CD8-positive, alpha-beta T cell (primary cell): ENCODE measurements at regions of chr14 and their contacts with region 1.

Region 1: DNA sequence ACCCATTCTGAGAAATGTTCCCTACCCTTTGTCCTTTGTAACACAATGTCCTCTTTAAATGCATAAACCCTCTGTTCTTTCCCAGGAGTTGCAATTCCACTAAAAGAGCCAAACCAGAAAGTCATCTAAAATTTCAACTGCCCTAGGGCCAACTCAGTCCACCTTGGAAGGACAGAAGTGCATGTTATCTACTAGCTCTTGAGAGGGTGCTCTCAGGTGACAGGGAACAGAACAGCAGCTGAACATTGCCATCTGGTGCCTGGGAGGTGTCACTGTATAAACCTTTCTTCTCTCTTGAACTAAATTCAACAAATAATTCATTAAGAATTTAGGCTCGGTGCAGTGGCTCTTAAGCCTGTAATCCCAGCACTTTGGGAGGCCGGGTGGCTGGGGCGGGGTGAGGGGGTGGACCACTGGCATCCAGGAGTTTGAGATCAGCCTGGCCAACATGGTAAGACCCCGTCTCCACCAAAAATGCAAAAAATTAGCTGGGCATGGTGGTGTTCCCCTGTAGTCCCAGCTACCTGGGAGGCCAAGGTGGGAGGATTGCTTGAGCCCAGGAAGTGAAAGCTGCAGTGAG is 10.3 kb upstream of the FERMT2 start:
- DNase-seq: peak in 8 of 9 experiments; percentile 30 to 80 (median 60)
- ATAC-seq: peak; percentile 87
- H3K4me3 ChIP-seq: no peak overlapping the region
- H3K4me3 Mint-ChIP-seq: no peak overlapping the region
- H3K27ac ChIP-seq: no peak overlapping the region
- H3K27ac Mint-ChIP-seq: peak overlapping the region; percentile 5
- H3K4me1 ChIP-seq: no peaks in the 10 kb centered on the region
- H3K4me1 Mint-ChIP-seq: peaks cover 6% of the 10 kb centered on the region
- H3K27me3 ChIP-seq: no peaks in the 10 kb centered on the region
- H3K27me3 Mint-ChIP-seq: no peaks in the 10 kb centered on the region
- CTCF ChIP-seq: peak; percentile 54

Region 2: GRCh38 chr14:51989293-51990234 is 971.6 kb before region 1 on chr14 and contains the start of gene RTRAF:
- CTCF ChIA-PET with region 1: no interaction called
- POLR2A ChIA-PET with region 1: no interaction called
- intact Hi-C with region 1: loop called in 1 of 2 experiments (anchors 10 kb)
- DNase-seq: peak; percentile 77 to 97 (median 91)
- ATAC-seq: peak; percentile 96
- H3K4me3 ChIP-seq: peak within 1 kb of the TSS; percentile 65 to 84
- H3K4me3 Mint-ChIP-seq: peak within 1 kb of the TSS; percentile 94
- H3K27ac ChIP-seq: peak within 1 kb of the TSS; percentile 84 to 85
- H3K27ac Mint-ChIP-seq: peak within 1 kb of the TSS; percentile 94
- H3K4me1 ChIP-seq: peaks cover 15% of the 10 kb centered on the region
- H3K4me1 Mint-ChIP-seq: peaks cover 46% of the 10 kb centered on the region
- H3K27me3 ChIP-seq: no peaks in the 10 kb centered on the region
- H3K27me3 Mint-ChIP-seq: no peaks in the 10 kb centered on the region
- CTCF ChIP-seq: no peak
- total RNA-seq, gene RTRAF: 155 to 161 TPM

Region 3: DNA sequence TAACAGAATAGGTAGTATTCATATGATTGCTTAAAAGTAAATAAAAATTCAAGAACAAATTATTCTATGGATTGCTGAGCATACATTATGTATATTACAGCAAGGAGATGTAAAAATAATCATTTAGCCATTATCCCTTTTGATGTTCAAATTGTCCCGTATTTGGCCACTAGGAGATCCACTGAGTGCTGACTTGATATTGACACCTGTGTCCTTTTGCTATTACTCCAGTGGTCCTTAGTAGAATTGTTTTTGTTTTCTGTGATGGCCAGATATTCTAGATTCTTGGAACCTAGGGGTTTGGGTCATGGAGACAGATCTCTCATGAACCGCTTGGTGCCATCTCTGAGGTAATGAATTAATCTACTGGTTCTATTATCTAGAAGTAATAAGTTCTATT is 282.6 kb before region 1 on chr14:
- CTCF ChIA-PET with region 1: interaction called, 3 read pairs
- POLR2A ChIA-PET with region 1: no interaction called
- intact Hi-C with region 1: loop called in 1 of 2 experiments (anchors 10 kb)
- DNase-seq: peak in 2 of 9 experiments; percentile 40 to 51
- ATAC-seq: peak; percentile 61
- H3K4me3 ChIP-seq: no peak overlapping the region
- H3K4me3 Mint-ChIP-seq: no peak overlapping the region
- H3K27ac ChIP-seq: no peak overlapping the region
- H3K27ac Mint-ChIP-seq: no peak overlapping the region
- H3K4me1 ChIP-seq: no peaks in the 10 kb centered on the region
- H3K4me1 Mint-ChIP-seq: peaks cover 2% of the 10 kb centered on the region
- H3K27me3 ChIP-seq: no peaks in the 10 kb centered on the region
- H3K27me3 Mint-ChIP-seq: no peaks in the 10 kb centered on the region
- CTCF ChIP-seq: peak; percentile 59

Region 4: GRCh38 chr14:52829527-52829926 is 131.6 kb before region 1 on chr14:
- CTCF ChIA-PET with region 1: interaction called, 143 read pairs
- POLR2A ChIA-PET with region 1: interaction called, 4 read pairs
- intact Hi-C with region 1: no loop called
- DNase-seq: no peak
- ATAC-seq: no peak
- H3K4me3 ChIP-seq: no peak overlapping the region
- H3K4me3 Mint-ChIP-seq: no peak overlapping the region
- H3K27ac ChIP-seq: no peak overlapping the region
- H3K27ac Mint-ChIP-seq: no peak overlapping the region
- H3K4me1 ChIP-seq: no peaks in the 10 kb centered on the region
- H3K4me1 Mint-ChIP-seq: no peaks in the 10 kb centered on the region
- H3K27me3 ChIP-seq: no peaks in the 10 kb centered on the region
- H3K27me3 Mint-ChIP-seq: peaks cover 5% of the 10 kb centered on the region
- CTCF ChIP-seq: no peak

Region 5: GRCh38 chr14:52918486-52918885 is 42.7 kb before region 1 on chr14:
- CTCF ChIA-PET with region 1: interaction called, 5 read pairs
- POLR2A ChIA-PET with region 1: no interaction called
- intact Hi-C with region 1: loop called in 1 of 2 experiments (anchors 2 kb)
- DNase-seq: peak in 5 of 9 experiments; percentile 8 to 85 (median 14)
- ATAC-seq: peak; percentile 95
- H3K4me3 ChIP-seq: no peak overlapping the region
- H3K4me3 Mint-ChIP-seq: no peak overlapping the region
- H3K27ac ChIP-seq: peak overlapping the region; percentile 28 to 84
- H3K27ac Mint-ChIP-seq: peak overlapping the region; percentile 85
- H3K4me1 ChIP-seq: peaks cover 25% of the 10 kb centered on the region
- H3K4me1 Mint-ChIP-seq: peaks cover 33% of the 10 kb centered on the region
- H3K27me3 ChIP-seq: no peaks in the 10 kb centered on the region
- H3K27me3 Mint-ChIP-seq: no peaks in the 10 kb centered on the region
- CTCF ChIP-seq: no peak